ENCODE measurements at regions of chr13 and their contacts with region 1.

Region 1: GRCh38 chr13:27424246-27425157 is at the start of gene GTF3A:
- DNase-seq: peak; percentile 81 to 93
- H3K4me3 ChIP-seq: peak within 1 kb of the TSS; percentile 87
- H3K4me3 Mint-ChIP-seq: peak within 1 kb of the TSS; percentile 87
- H3K27ac Mint-ChIP-seq: peak within 1 kb of the TSS; percentile 88
- H3K4me1 ChIP-seq: peaks cover 8% of the 10 kb centered on the region
- H3K4me1 Mint-ChIP-seq: peaks cover 16% of the 10 kb centered on the region
- H3K27me3 ChIP-seq: no peaks in the 10 kb centered on the region
- H3K27me3 Mint-ChIP-seq: no peaks in the 10 kb centered on the region
- CTCF ChIP-seq: no peak
- total RNA-seq, gene GTF3A: 132 and 141 TPM in 2 replicates

Region 2: GRCh38 chr13:27321468-27322431 is 102.8 kb before region 1 on chr13:
- CTCF ChIA-PET with region 1: no interaction called
- POLR2A ChIA-PET with region 1: no interaction called
- intact Hi-C with region 1: no loop called
- DNase-seq: no peak
- H3K4me3 ChIP-seq: no peak overlapping the region
- H3K4me3 Mint-ChIP-seq: no peak overlapping the region
- H3K27ac Mint-ChIP-seq: no peak overlapping the region
- H3K4me1 ChIP-seq: no peaks in the 10 kb centered on the region
- H3K4me1 Mint-ChIP-seq: no peaks in the 10 kb centered on the region
- H3K27me3 ChIP-seq: no peaks in the 10 kb centered on the region
- H3K27me3 Mint-ChIP-seq: peaks cover 11% of the 10 kb centered on the region
- CTCF ChIP-seq: no peak

Region 3: GRCh38 chr13:27379694-27380641 is 44.5 kb before region 1 on chr13:
- CTCF ChIA-PET with region 1: interaction called, 4 read pairs
- POLR2A ChIA-PET with region 1: no interaction called
- intact Hi-C with region 1: loop called (anchors 1 kb)
- DNase-seq: peak; percentile 85 to 90
- H3K4me3 ChIP-seq: no peak overlapping the region
- H3K4me3 Mint-ChIP-seq: no peak overlapping the region
- H3K27ac Mint-ChIP-seq: no peak overlapping the region
- H3K4me1 ChIP-seq: peaks cover 4% of the 10 kb centered on the region; the same call in 1 of the 2 replicates
- H3K4me1 Mint-ChIP-seq: peaks cover 11% of the 10 kb centered on the region
- H3K27me3 ChIP-seq: no peaks in the 10 kb centered on the region
- H3K27me3 Mint-ChIP-seq: no peaks in the 10 kb centered on the region
- CTCF ChIP-seq: peak; percentile 88 to 90

Region 4: DNA sequence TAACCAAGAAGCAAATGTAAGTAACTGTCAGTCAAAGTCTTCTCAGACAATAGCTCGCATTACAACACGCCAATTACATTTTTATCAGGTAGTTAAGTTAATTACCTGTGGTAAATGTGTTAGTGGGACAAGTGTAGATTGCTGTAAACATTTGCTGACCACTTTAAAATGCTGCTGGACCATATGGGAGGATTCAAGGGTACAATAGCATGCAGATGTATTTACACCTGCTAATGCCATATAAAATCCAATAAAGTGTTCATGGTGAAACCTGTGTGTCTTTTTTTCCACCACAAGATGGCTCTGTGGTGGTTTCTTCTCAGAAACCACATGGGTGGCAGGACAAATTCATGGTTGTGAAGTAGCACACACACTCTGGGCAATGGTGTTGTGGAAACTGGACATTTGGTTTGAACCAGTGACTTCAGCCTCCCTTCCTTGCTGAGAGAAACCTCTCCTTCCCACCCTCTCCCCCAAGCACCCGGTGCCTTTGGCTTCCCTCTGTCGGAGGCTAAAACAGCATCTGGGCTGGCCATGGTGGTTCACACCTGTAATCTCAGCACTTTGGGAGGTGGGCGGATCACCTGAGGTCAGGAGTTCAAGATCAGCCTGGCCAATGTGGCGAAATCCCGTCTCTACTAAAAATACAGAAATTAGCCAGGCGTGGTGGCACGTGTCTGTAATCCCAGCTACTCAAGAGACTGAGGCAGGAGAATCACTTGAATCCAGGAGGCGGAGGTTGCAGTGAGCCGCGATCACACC is 18.1 kb before region 1 on chr13:
- CTCF ChIA-PET with region 1: interaction called, 22 read pairs
- POLR2A ChIA-PET with region 1: interaction called, 3 read pairs
- intact Hi-C with region 1: loop called (anchors 1 kb)
- DNase-seq: peak in 1 of 2 experiments; percentile 57
- H3K4me3 ChIP-seq: no peak overlapping the region
- H3K4me3 Mint-ChIP-seq: no peak overlapping the region
- H3K27ac Mint-ChIP-seq: no peak overlapping the region
- H3K4me1 ChIP-seq: peaks cover 43% of the 10 kb centered on the region
- H3K4me1 Mint-ChIP-seq: peaks cover 32% of the 10 kb centered on the region
- H3K27me3 ChIP-seq: no peaks in the 10 kb centered on the region
- H3K27me3 Mint-ChIP-seq: no peaks in the 10 kb centered on the region
- CTCF ChIP-seq: peak; percentile 62 to 65

Region 5: DNA sequence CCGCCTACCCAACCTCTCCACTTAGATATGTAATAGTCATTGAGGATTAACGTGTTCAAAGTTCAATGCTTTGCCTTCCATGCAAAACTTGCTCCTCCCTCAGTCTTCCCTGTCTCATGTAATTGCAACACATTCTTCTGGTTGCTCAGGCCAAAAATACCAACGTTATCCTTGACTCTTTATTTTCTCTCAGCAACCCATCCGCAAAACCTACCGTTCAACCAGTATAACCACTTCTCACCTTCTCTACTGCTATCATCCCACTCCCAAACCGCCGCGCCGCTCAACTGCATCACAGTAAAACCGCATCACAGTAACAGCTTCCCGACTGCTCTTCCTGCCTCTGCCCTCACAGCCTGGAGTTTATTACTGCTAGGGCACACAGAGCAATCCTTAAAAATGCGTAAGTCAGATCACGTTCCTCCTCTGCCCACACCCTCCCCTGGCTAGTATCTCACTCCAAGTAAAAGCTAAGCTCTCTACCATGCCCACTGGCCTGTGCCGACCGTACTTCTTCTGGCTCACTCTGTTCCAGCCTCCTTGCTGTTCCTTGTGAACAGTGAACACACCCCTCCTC is 17.7 kb after region 1 on chr13:
- CTCF ChIA-PET with region 1: interaction called, 10 read pairs
- POLR2A ChIA-PET with region 1: interaction called, 3 read pairs
- intact Hi-C with region 1: loop called (anchors 2 kb)
- DNase-seq: peak; percentile 73 to 83
- H3K4me3 ChIP-seq: peak overlapping the region; percentile 23
- H3K4me3 Mint-ChIP-seq: peak overlapping the region; percentile 68
- H3K27ac Mint-ChIP-seq: peak overlapping the region; percentile 81
- H3K4me1 ChIP-seq: peaks cover 26% of the 10 kb centered on the region
- H3K4me1 Mint-ChIP-seq: peaks cover 26% of the 10 kb centered on the region
- H3K27me3 ChIP-seq: no peaks in the 10 kb centered on the region
- H3K27me3 Mint-ChIP-seq: no peaks in the 10 kb centered on the region
- CTCF ChIP-seq: no peak